Calu3 (cell line): ENCODE measurements at regions of chr3 and their contacts with region 1.

Region 1: GRCh38 chr3:138935848-138936740 is 10.8 kb downstream of the FOXL2 start:
- DNase-seq: peak; percentile 94
- H3K4me3 Mint-ChIP-seq: peak overlapping the region; percentile 90
- H3K27ac Mint-ChIP-seq: no peak overlapping the region
- H3K4me1 Mint-ChIP-seq: peaks cover 47% of the 10 kb centered on the region
- H3K27me3 Mint-ChIP-seq: peaks cover 67% of the 10 kb centered on the region
- CTCF ChIP-seq: peak; percentile 99

Region 2: DNA sequence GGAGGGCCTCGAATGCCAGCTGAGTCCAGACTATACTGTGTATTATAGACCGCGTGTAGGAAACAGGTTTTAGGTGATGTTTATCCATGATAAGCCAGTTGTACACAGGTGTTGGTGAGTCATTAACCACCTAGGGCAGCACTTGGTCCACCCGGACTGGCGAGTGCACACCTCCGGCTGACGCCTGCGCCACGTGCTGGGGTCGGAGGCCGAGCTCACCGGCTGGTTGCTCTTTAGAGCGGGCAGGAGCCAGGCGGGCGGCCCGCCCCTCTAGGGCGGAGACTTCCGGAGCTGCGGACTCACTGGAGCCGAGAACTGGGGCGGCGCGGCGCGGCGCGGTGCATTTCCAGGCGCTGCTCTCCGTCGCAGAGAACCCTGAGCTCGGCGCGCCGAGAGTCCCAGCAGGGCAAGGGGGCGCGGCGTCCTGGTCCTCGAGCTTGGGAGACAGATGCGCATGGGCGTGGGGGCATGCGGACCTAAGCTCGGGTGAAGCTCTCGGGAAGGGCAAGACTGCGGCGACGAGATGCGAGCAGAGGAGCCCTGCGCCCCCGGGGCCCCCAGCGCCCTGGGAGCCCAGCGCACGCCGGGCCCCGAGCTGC is 501.7 kb before region 1 on chr3 and contains the start of gene ESYT3:
- CTCF ChIA-PET with region 1: interaction called, 10 read pairs
- intact Hi-C with region 1: no loop called
- DNase-seq: peak; percentile 96
- H3K4me3 Mint-ChIP-seq: peak within 1 kb of the TSS; percentile 79
- H3K27ac Mint-ChIP-seq: peak within 1 kb of the TSS; percentile 68
- H3K4me1 Mint-ChIP-seq: peaks cover 13% of the 10 kb centered on the region
- H3K27me3 Mint-ChIP-seq: peaks cover 79% of the 10 kb centered on the region
- CTCF ChIP-seq: no peak
- total RNA-seq, gene ESYT3: 3.2 and 3.5 TPM in 2 replicates

Region 3: DNA sequence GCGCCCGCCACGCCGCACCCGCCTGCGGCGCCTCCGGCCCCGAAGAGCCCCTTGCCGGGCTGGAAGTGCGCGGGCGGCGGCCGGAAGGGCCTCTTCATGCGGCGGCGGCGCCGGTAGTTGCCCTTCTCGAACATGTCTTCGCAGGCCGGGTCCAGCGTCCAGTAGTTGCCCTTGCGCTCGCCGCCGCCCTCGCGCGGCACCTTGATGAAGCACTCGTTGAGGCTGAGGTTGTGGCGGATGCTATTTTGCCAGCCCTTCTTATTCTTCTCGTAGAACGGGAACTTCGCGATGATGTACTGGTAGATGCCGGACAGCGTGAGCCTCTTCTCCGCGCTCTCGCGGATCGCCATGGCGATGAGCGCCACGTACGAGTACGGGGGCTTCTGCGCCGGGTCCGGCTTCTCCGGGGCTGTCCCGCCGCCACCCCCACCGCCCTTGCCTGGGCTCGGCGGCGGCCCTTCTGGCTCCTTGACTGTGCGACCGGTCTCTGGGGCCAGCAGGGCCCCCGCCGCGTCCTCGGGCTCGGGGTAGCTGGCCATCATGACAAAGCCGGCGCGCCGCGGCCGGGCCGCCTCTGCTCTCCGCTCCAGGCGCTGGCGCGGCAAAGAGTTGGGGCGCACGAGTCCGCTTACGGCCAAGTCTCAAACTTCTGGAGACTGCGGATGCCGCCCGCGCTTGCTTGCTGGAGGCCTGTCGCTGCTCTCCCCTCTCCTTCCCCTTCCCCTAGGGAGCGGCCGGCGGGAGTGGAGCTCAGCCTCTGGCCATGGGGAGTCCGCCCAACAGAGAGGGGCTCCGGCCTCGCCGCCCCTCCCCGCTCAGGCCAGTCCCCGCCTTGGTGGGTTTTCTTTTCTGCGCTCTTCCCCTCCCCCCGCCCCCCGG is 10.3 kb after region 1 on chr3:
- CTCF ChIA-PET with region 1: interaction called, 12 read pairs
- intact Hi-C with region 1: no loop called
- DNase-seq: peak; percentile 86
- H3K4me3 Mint-ChIP-seq: peak overlapping the region; percentile 66
- H3K27ac Mint-ChIP-seq: no peak overlapping the region
- H3K4me1 Mint-ChIP-seq: peaks cover 25% of the 10 kb centered on the region
- H3K27me3 Mint-ChIP-seq: peaks cover 93% of the 10 kb centered on the region
- CTCF ChIP-seq: peak; percentile 32

Region 4: GRCh38 chr3:139202226-139202958 is 266.3 kb after region 1 on chr3:
- CTCF ChIA-PET with region 1: interaction called, 9 read pairs
- intact Hi-C with region 1: loop called (anchors 5 kb)
- DNase-seq: peak; percentile 87
- H3K4me3 Mint-ChIP-seq: no peak overlapping the region
- H3K27ac Mint-ChIP-seq: peak overlapping the region; percentile 69
- H3K4me1 Mint-ChIP-seq: peaks cover 9% of the 10 kb centered on the region
- H3K27me3 Mint-ChIP-seq: peaks cover 26% of the 10 kb centered on the region
- CTCF ChIP-seq: peak; percentile 35

Region 5: GRCh38 chr3:139491027-139491700 is 555.1 kb after region 1 on chr3:
- CTCF ChIA-PET with region 1: interaction called, 14 read pairs
- intact Hi-C with region 1: no loop called
- DNase-seq: peak; percentile 39
- H3K4me3 Mint-ChIP-seq: no peak overlapping the region
- H3K27ac Mint-ChIP-seq: peak overlapping the region; percentile 16
- H3K4me1 Mint-ChIP-seq: peaks cover 11% of the 10 kb centered on the region
- H3K27me3 Mint-ChIP-seq: no peaks in the 10 kb centered on the region
- CTCF ChIP-seq: peak; percentile 3